SK-N-SH (cell line): ENCODE measurements at regions of chr12 and their contacts with region 1.

Region 1: DNA sequence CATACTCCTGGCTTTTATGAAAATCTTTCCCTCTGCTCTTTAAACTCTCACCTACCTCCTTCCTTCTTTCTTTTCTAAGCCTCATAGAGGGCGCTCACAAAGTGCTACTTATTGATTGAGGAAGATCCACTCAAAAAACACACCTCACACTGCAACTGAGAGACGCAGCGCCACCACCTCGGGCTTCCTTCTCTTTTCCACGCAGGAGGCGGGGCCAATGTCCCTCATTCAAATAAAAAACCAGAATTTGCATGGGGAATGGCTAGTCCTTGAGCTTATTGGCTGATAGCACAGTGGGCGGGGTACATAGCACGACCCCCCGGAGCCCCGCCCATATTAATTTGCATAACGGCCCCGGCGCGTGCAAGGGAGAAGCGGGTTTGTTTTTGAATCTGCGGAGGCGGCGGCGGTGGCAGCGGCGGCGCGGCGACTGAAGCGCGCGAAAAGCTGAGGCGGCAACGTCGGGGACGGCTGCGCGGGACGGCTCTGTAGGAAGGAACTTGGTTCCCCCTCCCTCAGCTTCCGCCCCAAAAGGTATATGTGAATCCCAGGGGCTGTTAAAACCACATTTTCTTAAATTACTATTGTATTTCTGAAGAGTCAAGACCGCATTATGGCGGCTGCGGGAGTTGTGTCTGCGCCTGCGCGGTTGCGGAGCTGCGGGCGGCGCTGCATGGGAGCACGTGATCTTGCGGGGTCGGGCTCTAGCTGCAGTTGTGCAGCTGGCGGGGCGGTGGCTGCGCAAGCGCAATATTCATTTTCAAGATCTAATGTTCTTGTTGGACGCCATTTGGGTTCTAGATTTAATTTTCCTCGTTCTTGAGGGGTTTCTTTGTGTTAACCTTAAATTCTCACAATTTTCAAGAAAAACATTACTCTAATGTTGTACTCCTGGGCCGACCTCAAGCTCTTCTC is at the start of gene ATF7IP:
- DNase-seq: peak; percentile 96
- H3K4me3 ChIP-seq: peak within 1 kb of the TSS; percentile 70 to 91
- H3K27ac ChIP-seq: peak within 1 kb of the TSS; percentile 94 to 95
- H3K4me1 ChIP-seq: no peaks in the 10 kb centered on the region; a peak in 1 of 4 replicates
- H3K27me3 ChIP-seq: no peaks in the 10 kb centered on the region
- CTCF ChIP-seq: peak; percentile 51
- EP300 ChIP-seq: no peak; a peak in 1 of 4 replicates
- RAD21 ChIP-seq: peak; percentile 40; the same call in 1 of the 2 replicates
- polyA plus RNA-seq, gene ATF7IP: 2.8 and 3.4 TPM in 2 replicates

Region 2: DNA sequence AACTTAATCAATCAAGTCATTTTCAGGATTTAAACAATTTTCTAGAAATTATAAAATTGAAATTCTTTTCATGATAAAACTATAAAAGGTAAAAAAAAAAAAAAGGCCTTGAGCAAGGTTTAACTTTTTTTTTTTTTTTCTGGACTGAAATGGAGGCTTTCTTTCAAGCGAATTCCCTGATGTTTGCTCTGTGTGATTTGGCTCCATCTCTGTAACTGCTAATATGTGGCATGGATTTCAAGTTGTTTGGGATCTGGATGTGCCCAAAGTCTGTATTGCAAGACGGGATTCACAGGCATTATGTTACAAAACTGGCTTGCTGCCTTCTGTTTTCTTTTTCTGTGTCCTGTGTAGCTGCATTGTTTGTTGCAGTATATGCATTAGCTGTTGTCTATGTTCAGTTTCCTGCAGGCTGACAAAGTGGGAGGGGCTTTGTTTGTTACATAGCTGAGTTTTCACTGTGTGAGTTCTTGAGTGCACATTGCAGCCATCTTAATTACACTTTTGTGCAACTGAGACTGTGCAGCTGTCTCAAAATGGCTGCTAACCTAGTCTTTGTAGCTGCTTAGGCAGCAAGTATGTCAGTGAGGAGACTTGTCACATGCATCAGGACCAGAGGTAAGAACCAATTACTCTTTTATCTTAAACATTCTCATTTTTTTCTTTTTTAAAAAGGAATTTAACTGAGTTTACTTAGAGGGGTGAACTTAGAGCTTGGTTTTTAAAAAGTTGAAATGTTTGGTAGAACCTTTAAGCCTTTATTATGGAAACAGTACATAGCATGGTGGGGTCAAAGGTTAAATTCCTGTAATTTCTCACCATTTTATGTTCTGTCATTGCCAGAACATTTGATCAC is 19.5 kb after region 1 on chr12:
- CTCF ChIA-PET with region 1: interaction called, 10 read pairs
- POLR2A ChIA-PET with region 1: interaction called, 10 read pairs
- DNase-seq: peak; percentile 60
- H3K4me3 ChIP-seq: peak overlapping the region; percentile 7 to 34; a peak in 3 of 4 replicates
- H3K27ac ChIP-seq: peak overlapping the region; percentile 70 to 96
- H3K4me1 ChIP-seq: peaks cover 6% of the 10 kb centered on the region in 2 experiments; a peak in 3 of 4 replicates
- H3K27me3 ChIP-seq: no peaks in the 10 kb centered on the region
- CTCF ChIP-seq: no peak
- EP300 ChIP-seq: peak in 1 of 2 experiments; percentile 58; a peak in 2 of 4 replicates
- RAD21 ChIP-seq: peak; percentile 21; the same call in 1 of the 2 replicates

Region 3: GRCh38 chr12:14431975-14432374 is 66.4 kb after region 1 on chr12:
- CTCF ChIA-PET with region 1: no interaction called
- POLR2A ChIA-PET with region 1: no interaction called
- DNase-seq: no peak
- H3K4me3 ChIP-seq: no peak overlapping the region
- H3K27ac ChIP-seq: no peak overlapping the region; a peak in 1 of 4 replicates
- H3K4me1 ChIP-seq: peaks cover 0 to 2% of the 10 kb centered on the region in 2 experiments; a peak in 2 of 4 replicates
- H3K27me3 ChIP-seq: no peaks in the 10 kb centered on the region
- CTCF ChIP-seq: no peak
- EP300 ChIP-seq: no peak
- RAD21 ChIP-seq: no peak